ENCODE measurements at regions of chr11 and their contacts with region 1.

Region 1: GRCh38 chr11:62340269-62340901 is 3.1 kb downstream of the ASRGL1 start:
- DNase-seq: no peak
- H3K4me3 ChIP-seq: no peak overlapping the region
- H3K27me3 ChIP-seq: peaks cover 4% of the 10 kb centered on the region; the same call in 1 of the 2 replicates
- CTCF ChIP-seq: peak; percentile 82

Region 2: GRCh38 chr11:62033191-62034044 is 307.0 kb before region 1 on chr11:
- CTCF ChIA-PET with region 1: no interaction called
- POLR2A ChIA-PET with region 1: no interaction called
- DNase-seq: no peak
- H3K4me3 ChIP-seq: no peak overlapping the region
- H3K27me3 ChIP-seq: no peaks in the 10 kb centered on the region
- CTCF ChIP-seq: no peak

Region 3: GRCh38 chr11:62353844-62354243 is 13.5 kb after region 1 on chr11:
- CTCF ChIA-PET with region 1: interaction called, 10 read pairs
- POLR2A ChIA-PET with region 1: no interaction called
- DNase-seq: no peak
- H3K4me3 ChIP-seq: no peak overlapping the region
- H3K27me3 ChIP-seq: no peaks in the 10 kb centered on the region
- CTCF ChIP-seq: no peak

Region 4: GRCh38 chr11:62360685-62361084 is 20.3 kb after region 1 on chr11:
- CTCF ChIA-PET with region 1: interaction called, 10 read pairs
- POLR2A ChIA-PET with region 1: no interaction called
- DNase-seq: no peak
- H3K4me3 ChIP-seq: no peak overlapping the region
- H3K27me3 ChIP-seq: no peaks in the 10 kb centered on the region
- CTCF ChIP-seq: no peak

Region 5: GRCh38 chr11:62370743-62371440 is 30.5 kb after region 1 on chr11:
- CTCF ChIA-PET with region 1: interaction called, 20 read pairs
- POLR2A ChIA-PET with region 1: no interaction called
- DNase-seq: no peak
- H3K4me3 ChIP-seq: no peak overlapping the region
- H3K27me3 ChIP-seq: no peaks in the 10 kb centered on the region
- CTCF ChIP-seq: no peak

Region 6: GRCh38 chr11:62383822-62384221 is 43.4 kb after region 1 on chr11:
- CTCF ChIA-PET with region 1: interaction called, 10 read pairs
- POLR2A ChIA-PET with region 1: no interaction called
- DNase-seq: no peak
- H3K4me3 ChIP-seq: no peak overlapping the region
- H3K27me3 ChIP-seq: peaks cover 2% of the 10 kb centered on the region; the same call in 1 of the 2 replicates
- CTCF ChIP-seq: no peak